PC-9 (cell line): ENCODE measurements at regions of chr12 and their contacts with region 1.

Region 1: DNA sequence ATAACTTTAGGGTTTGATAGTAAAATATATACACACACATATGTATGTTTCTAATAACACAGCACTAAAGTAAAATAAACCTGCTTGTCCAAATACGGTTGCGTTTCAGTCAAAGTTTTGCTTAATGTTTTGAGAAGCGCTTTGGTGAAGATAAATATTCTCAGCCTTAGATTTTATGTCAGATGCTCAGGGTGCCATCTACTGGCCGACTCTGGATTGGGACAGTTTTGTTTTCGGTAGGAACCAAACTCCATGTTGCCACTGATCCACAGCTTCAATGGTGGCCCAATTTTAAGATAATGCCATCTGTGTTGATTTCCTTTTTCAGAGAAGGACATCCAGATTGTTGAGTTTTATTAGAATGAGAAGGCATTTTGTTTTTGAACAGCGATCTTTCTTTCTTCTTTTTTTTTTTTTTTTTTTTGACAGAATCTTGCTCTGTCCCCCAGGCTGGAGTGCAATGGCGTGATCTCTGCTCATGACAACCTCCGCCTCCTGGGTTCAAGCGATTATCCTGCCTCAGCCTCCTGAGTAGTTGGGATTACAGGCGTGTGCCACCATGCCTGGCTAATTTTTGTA is 43.1 kb downstream of the LLPH start:
- DNase-seq: peak in 1 of 2 experiments; percentile 56
- H3K4me3 ChIP-seq: no peak overlapping the region
- H3K27ac ChIP-seq: no peak overlapping the region
- H3K4me1 ChIP-seq: no peaks in the 10 kb centered on the region
- H3K27me3 ChIP-seq: no peaks in the 10 kb centered on the region
- CTCF ChIP-seq: peak; percentile 80

Region 2: DNA sequence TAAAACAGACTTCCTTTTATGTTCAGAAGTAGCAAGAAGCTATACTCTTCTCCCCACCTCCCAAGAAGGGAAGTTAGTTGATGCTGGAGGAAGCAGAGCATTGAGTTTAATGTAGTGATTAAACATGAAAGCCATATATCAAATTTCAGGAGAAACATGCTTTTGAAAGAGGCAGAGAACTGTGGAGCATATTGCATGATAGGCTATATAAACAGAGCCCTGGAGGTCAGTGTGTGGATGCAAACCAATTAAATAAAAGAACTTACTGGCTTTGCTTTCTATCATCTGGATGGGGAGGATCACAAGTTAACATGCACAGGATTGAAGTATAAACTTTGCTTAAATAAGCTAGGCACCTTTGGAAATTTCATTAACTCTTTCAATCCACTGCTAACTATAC is 714.9 kb before region 1 on chr12:
- CTCF ChIA-PET with region 1: interaction called, 10 read pairs
- POLR2A ChIA-PET with region 1: no interaction called
- intact Hi-C with region 1: no loop called
- DNase-seq: no peak
- H3K4me3 ChIP-seq: no peak overlapping the region
- H3K27ac ChIP-seq: no peak overlapping the region
- H3K4me1 ChIP-seq: no peaks in the 10 kb centered on the region
- H3K27me3 ChIP-seq: no peaks in the 10 kb centered on the region
- CTCF ChIP-seq: no peak

Region 3: GRCh38 chr12:65695113-65695865 is 392.2 kb before region 1 on chr12:
- CTCF ChIA-PET with region 1: no interaction called
- POLR2A ChIA-PET with region 1: no interaction called
- intact Hi-C with region 1: loop called (anchors 10 kb)
- DNase-seq: peak; percentile 54 to 86
- H3K4me3 ChIP-seq: no peak overlapping the region
- H3K27ac ChIP-seq: peak overlapping the region; percentile 24
- H3K4me1 ChIP-seq: peaks cover 25% of the 10 kb centered on the region
- H3K27me3 ChIP-seq: no peaks in the 10 kb centered on the region
- CTCF ChIP-seq: no peak

Region 4: GRCh38 chr12:65977384-65977783 is 110.1 kb before region 1 on chr12:
- CTCF ChIA-PET with region 1: interaction called, 10 read pairs
- POLR2A ChIA-PET with region 1: no interaction called
- intact Hi-C with region 1: loop called (anchors 2 kb)
- DNase-seq: no peak
- H3K4me3 ChIP-seq: no peak overlapping the region
- H3K27ac ChIP-seq: no peak overlapping the region
- H3K4me1 ChIP-seq: no peaks in the 10 kb centered on the region
- H3K27me3 ChIP-seq: no peaks in the 10 kb centered on the region
- CTCF ChIP-seq: no peak

Region 5: GRCh38 chr12:65992185-65992584 is 95.3 kb before region 1 on chr12:
- CTCF ChIA-PET with region 1: interaction called, 10 read pairs
- POLR2A ChIA-PET with region 1: no interaction called
- intact Hi-C with region 1: no loop called
- DNase-seq: no peak
- H3K4me3 ChIP-seq: no peak overlapping the region
- H3K27ac ChIP-seq: no peak overlapping the region
- H3K4me1 ChIP-seq: no peaks in the 10 kb centered on the region
- H3K27me3 ChIP-seq: no peaks in the 10 kb centered on the region
- CTCF ChIP-seq: no peak